GM12878 (cell line): ENCODE measurements at regions of chr21 and their contacts with region 1.

Region 1: DNA sequence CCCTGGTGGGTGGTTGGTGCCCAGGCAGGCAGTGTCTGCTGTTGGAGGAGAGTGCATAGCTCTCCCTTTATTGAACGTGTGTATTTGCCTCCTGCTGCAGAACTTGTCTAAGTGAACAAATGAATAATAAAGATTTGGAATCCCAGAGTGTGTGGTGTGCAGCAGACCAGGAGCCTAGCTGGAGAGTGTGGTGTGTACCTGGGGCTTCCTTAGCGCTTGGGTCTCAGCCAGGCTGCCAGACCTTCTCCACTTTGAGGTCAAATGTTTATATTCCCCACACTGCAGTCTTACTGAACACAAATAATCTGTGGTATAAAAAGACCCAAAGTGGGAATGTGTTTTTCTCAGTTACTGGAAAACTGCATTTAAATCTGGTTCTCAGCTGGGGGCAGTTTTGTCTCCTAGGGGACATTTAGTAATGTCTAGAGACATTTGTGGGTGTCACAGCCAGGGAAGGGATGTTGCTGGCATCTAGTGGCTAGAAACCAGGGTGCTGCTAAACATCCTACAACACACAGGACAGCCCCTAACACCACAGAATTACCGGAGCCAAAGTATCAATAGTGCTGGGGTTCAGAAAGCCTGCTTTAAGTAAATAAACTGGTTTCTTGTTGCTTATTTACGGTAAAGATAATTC is 23.6 kb downstream of the SLC37A1 start:
- DNase-seq: no peak
- ATAC-seq: peak; percentile 31
- H3K4me3 ChIP-seq: no peak overlapping the region
- H3K27ac ChIP-seq: no peak overlapping the region; the same call in 1 of the 2 replicates
- H3K4me1 ChIP-seq: peaks cover 51% of the 10 kb centered on the region
- H3K27me3 ChIP-seq: no peaks in the 10 kb centered on the region
- CTCF ChIP-seq: peak; percentile 61 to 82 (median 68)
- EP300 ChIP-seq: peak in 1 of 2 experiments; percentile 49; a peak in 1 of 4 replicates
- POLR2A ChIP-seq: no peak
- RAD21 ChIP-seq: peak; percentile 85

Region 2: DNA sequence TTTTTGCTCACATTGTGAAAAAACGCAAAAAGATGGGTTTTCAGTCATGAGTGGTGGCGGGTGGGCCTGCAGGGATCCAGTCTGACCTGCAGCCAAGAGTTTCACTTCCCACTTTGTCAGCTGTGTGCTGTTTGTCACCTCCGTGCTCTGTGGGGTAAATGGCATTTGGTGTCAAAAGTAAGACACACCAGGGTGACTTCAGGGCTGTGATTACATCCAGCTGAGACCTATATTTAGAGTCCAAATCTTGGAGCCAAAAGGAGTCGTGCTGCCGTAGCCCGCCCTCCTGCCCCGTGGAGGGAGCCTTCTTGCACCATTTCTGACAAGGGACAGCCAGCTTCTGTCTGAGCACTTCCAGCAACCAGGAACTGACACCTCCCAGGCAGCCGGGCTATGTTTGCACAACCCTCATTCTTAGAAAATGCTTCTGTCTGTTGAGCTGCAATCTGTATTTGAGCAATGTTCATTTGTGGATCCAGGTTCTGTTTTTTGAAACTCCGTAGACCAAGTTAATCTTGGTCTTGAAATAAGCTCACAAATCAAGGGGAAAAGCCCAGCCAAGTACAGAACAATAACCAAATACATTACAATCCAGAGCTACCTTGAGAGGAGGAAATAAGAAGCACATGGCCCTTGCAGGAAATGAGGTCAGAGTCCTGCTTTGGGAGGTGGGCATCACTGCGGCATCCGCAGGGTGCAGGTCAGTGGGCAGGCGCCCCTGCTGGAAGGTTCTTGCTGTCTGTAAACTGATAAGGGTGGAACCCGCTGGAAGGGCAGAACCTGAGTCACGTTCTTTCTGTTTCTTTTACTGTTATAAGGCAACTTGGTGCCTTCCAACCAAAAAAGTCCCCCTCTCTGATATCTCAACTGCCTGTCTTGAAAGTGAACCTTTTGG is 303.9 kb before region 1 on chr21:
- CTCF ChIA-PET with region 1: interaction called, 11 read pairs
- POLR2A ChIA-PET with region 1: interaction called, 3 read pairs
- RAD21 ChIA-PET with region 1: interaction called, 12 read pairs
- SMC1A ChIA-PET with region 1: interaction called, 6 read pairs
- in situ Hi-C with region 1: loop called (anchors 5 kb)
- intact Hi-C with region 1: loop called (anchors 5 kb)
- DNase-seq: peak; percentile 82
- ATAC-seq: peak; percentile 71
- H3K4me3 ChIP-seq: no peak overlapping the region; the same call in 1 of the 2 replicates
- H3K27ac ChIP-seq: peak overlapping the region; percentile 84
- H3K4me1 ChIP-seq: peaks cover 69% of the 10 kb centered on the region
- H3K27me3 ChIP-seq: no peaks in the 10 kb centered on the region
- CTCF ChIP-seq: peak; percentile 37 to 47 (median 43); a peak in 4 of 6 replicates
- EP300 ChIP-seq: peak; percentile 91 to 98
- POLR2A ChIP-seq: no peak
- RAD21 ChIP-seq: 0 out of 2 replicates have a peak, but pooled peaks have one; percentile 7

Region 3: GRCh38 chr21:42309753-42310221 is 227.4 kb before region 1 on chr21:
- CTCF ChIA-PET with region 1: interaction called, 68 read pairs
- POLR2A ChIA-PET with region 1: interaction called, 3 read pairs
- RAD21 ChIA-PET with region 1: interaction called, 45 read pairs
- SMC1A ChIA-PET with region 1: interaction called, 28 read pairs
- in situ Hi-C with region 1: loop called (anchors 5 kb)
- intact Hi-C with region 1: loop called (anchors 1 kb)
- DNase-seq: no peak
- ATAC-seq: peak; percentile 86
- H3K4me3 ChIP-seq: no peak overlapping the region
- H3K27ac ChIP-seq: no peak overlapping the region
- H3K4me1 ChIP-seq: no peaks in the 10 kb centered on the region
- H3K27me3 ChIP-seq: no peaks in the 10 kb centered on the region
- CTCF ChIP-seq: peak; percentile 77 to 92 (median 90)
- EP300 ChIP-seq: no peak
- POLR2A ChIP-seq: no peak
- RAD21 ChIP-seq: peak; percentile 90

Region 4: GRCh38 chr21:42392721-42393442 is 144.3 kb before region 1 on chr21:
- CTCF ChIA-PET with region 1: interaction called, 6 read pairs
- POLR2A ChIA-PET with region 1: interaction called, 3 read pairs
- RAD21 ChIA-PET with region 1: interaction called, 15 read pairs
- SMC1A ChIA-PET with region 1: interaction called, 7 read pairs
- in situ Hi-C with region 1: no loop called
- intact Hi-C with region 1: no loop called
- DNase-seq: peak; percentile 96
- ATAC-seq: peak; percentile 91
- H3K4me3 ChIP-seq: peak overlapping the region; percentile 33; the same call in 1 of the 2 replicates
- H3K27ac ChIP-seq: peak overlapping the region; percentile 91
- H3K4me1 ChIP-seq: peaks cover 53% of the 10 kb centered on the region
- H3K27me3 ChIP-seq: no peaks in the 10 kb centered on the region
- CTCF ChIP-seq: no peak
- EP300 ChIP-seq: peak in 1 of 2 experiments; percentile 13; a peak in 1 of 4 replicates
- POLR2A ChIP-seq: no peak
- RAD21 ChIP-seq: peak; percentile 34

Region 5: GRCh38 chr21:42449296-42449927 is 87.8 kb before region 1 on chr21:
- CTCF ChIA-PET with region 1: interaction called, 117 read pairs
- POLR2A ChIA-PET with region 1: interaction called, 54 read pairs
- RAD21 ChIA-PET with region 1: interaction called, 41 read pairs
- SMC1A ChIA-PET with region 1: interaction called, 25 read pairs
- in situ Hi-C with region 1: no loop called
- intact Hi-C with region 1: no loop called
- DNase-seq: no peak
- ATAC-seq: peak; percentile 16
- H3K4me3 ChIP-seq: no peak overlapping the region
- H3K27ac ChIP-seq: peak overlapping the region; percentile 43
- H3K4me1 ChIP-seq: peaks cover 17% of the 10 kb centered on the region
- H3K27me3 ChIP-seq: no peaks in the 10 kb centered on the region
- CTCF ChIP-seq: no peak
- EP300 ChIP-seq: no peak
- POLR2A ChIP-seq: no peak
- RAD21 ChIP-seq: no peak

Region 6: GRCh38 chr21:42467140-42467983 is 69.9 kb before region 1 on chr21:
- CTCF ChIA-PET with region 1: interaction called, 168 read pairs
- POLR2A ChIA-PET with region 1: interaction called, 54 read pairs
- RAD21 ChIA-PET with region 1: interaction called, 146 read pairs
- SMC1A ChIA-PET with region 1: interaction called, 268 read pairs
- in situ Hi-C with region 1: no loop called
- intact Hi-C with region 1: loop called (anchors 1 kb)
- DNase-seq: no peak
- ATAC-seq: peak; percentile 42
- H3K4me3 ChIP-seq: no peak overlapping the region
- H3K27ac ChIP-seq: no peak overlapping the region
- H3K4me1 ChIP-seq: peaks cover 60% of the 10 kb centered on the region
- H3K27me3 ChIP-seq: no peaks in the 10 kb centered on the region
- CTCF ChIP-seq: peak; percentile 46 to 56 (median 49); a peak in 5 of 6 replicates
- EP300 ChIP-seq: peak; percentile 34 to 54; a peak in 1 of 4 replicates
- POLR2A ChIP-seq: no peak
- RAD21 ChIP-seq: peak; percentile 56

Region 7: GRCh38 chr21:42513985-42514882 is 23.0 kb before region 1 on chr21:
- CTCF ChIA-PET with region 1: interaction called, 23 read pairs
- POLR2A ChIA-PET with region 1: interaction called, 51 read pairs
- RAD21 ChIA-PET with region 1: interaction called, 35 read pairs
- SMC1A ChIA-PET with region 1: interaction called, 132 read pairs
- in situ Hi-C with region 1: no loop called
- intact Hi-C with region 1: no loop called
- DNase-seq: no peak
- ATAC-seq: peak; percentile 84
- H3K4me3 ChIP-seq: peak overlapping the region; percentile 94
- H3K27ac ChIP-seq: peak overlapping the region; percentile 41
- H3K4me1 ChIP-seq: peaks cover 11% of the 10 kb centered on the region
- H3K27me3 ChIP-seq: no peaks in the 10 kb centered on the region
- CTCF ChIP-seq: no peak
- EP300 ChIP-seq: no peak; a peak in 1 of 4 replicates
- POLR2A ChIP-seq: peak; percentile 80
- RAD21 ChIP-seq: no peak